IMR-90 (cell line): ENCODE measurements at regions of chrX and their contacts with region 1.

Region 1: DNA sequence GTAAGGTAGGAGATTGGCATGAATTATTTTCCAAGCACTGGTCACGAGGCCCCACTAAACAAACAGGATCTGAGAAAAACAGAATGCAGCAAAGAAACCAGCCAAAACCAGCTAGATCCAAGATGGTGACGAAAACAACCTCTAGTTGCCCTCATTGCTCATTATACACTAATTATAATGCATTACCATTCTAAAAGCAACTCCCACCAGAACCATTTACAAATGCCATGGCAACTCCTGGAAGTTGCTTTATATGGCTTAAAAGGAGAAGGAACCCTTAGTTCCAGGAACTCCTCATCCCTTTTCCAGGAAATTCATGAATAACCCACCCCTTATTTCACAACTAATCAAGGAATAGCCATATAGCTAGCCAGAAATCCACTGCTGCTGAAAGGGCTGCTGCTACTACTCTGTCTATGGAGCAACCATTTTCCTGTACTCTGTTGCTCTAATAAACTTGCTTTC is 69.3 kb downstream of the ABCB7 start:
- DNase-seq: no peak
- ATAC-seq: no peak
- H3K4me3 ChIP-seq: no peak overlapping the region
- H3K27ac ChIP-seq: no peak overlapping the region
- H3K4me1 ChIP-seq: no peaks in the 10 kb centered on the region
- H3K27me3 ChIP-seq: no peaks in the 10 kb centered on the region
- CTCF ChIP-seq: no peak
- POLR2A ChIP-seq: no peak
- RAD21 ChIP-seq: no peak

Region 2: GRCh38 chrX:75273483-75273882 is 186.7 kb after region 1 on chrX:
- CTCF ChIA-PET with region 1: no interaction called
- POLR2A ChIA-PET with region 1: no interaction called
- dilution Hi-C with region 1: no loop called
- in situ Hi-C with region 1: no loop called
- intact Hi-C with region 1: loop called (anchors 10 kb)
- DNase-seq: no peak
- ATAC-seq: peak; percentile 3; the same call in 1 of the 2 replicates
- H3K4me3 ChIP-seq: peak overlapping the region; percentile 84
- H3K27ac ChIP-seq: no peak overlapping the region
- H3K4me1 ChIP-seq: no peaks in the 10 kb centered on the region
- H3K27me3 ChIP-seq: no peaks in the 10 kb centered on the region
- CTCF ChIP-seq: no peak
- POLR2A ChIP-seq: no peak
- RAD21 ChIP-seq: no peak